ENCODE measurements at regions of chr10 and their contacts with region 1.

Region 1: GRCh38 chr10:103759100-103759781 is 96.1 kb downstream of the SH3PXD2A start:
- DNase-seq: peak; percentile 63
- H3K4me3 Mint-ChIP-seq: no peak overlapping the region
- H3K27ac Mint-ChIP-seq: peak overlapping the region; percentile 92
- H3K4me1 Mint-ChIP-seq: peaks cover 41% of the 10 kb centered on the region
- H3K27me3 Mint-ChIP-seq: no peaks in the 10 kb centered on the region
- CTCF ChIP-seq: no peak

Region 2: DNA sequence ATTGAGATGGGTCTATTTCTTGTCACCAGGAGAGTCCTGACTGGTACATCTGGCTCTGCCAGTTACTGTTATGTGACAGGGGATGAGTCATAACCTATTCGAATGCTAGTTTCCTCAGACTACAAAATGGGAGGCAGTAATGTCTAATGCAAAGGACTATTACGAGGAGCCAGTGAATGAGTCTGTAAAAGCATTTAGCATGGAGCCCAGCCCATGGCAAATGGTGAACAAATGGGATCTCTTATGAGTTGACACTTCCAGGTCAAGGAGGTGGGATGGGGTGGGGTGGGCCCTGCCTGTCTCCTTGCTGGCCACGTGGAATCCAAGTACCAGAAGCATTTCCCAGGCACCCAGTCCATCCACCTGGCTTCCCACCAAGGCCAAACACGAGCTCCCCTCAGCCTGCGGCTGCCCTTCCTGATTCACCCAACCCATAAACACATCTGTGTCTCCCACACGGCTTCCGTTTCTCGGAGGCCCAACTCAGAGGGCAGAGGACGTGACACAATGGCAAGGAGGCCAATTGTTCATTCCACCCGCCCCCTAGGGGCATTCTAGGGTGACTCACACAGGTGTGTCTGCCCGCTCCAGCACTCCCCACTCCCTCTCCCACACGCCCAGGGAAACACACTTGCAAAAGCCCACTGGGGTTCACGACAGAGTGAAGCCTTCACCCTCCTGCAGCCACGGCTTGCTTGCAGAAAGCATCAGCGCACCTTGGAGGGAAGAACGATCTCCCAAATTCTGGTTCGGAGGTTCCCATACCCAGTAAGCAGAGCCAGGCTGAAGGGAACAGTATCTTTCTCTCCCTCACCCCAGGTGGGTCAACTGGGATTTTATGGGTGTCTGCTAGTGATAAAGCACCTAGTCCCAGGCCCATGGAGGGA is 13.7 kb before region 1 on chr10:
- CTCF ChIA-PET with region 1: interaction called, 14 read pairs
- POLR2A ChIA-PET with region 1: interaction called, 55 read pairs
- intact Hi-C with region 1: no loop called
- DNase-seq: peak; percentile 93
- H3K4me3 Mint-ChIP-seq: peak overlapping the region; percentile 34
- H3K27ac Mint-ChIP-seq: peak overlapping the region; percentile 84
- H3K4me1 Mint-ChIP-seq: peaks cover 42% of the 10 kb centered on the region
- H3K27me3 Mint-ChIP-seq: no peaks in the 10 kb centered on the region
- CTCF ChIP-seq: no peak

Region 3: DNA sequence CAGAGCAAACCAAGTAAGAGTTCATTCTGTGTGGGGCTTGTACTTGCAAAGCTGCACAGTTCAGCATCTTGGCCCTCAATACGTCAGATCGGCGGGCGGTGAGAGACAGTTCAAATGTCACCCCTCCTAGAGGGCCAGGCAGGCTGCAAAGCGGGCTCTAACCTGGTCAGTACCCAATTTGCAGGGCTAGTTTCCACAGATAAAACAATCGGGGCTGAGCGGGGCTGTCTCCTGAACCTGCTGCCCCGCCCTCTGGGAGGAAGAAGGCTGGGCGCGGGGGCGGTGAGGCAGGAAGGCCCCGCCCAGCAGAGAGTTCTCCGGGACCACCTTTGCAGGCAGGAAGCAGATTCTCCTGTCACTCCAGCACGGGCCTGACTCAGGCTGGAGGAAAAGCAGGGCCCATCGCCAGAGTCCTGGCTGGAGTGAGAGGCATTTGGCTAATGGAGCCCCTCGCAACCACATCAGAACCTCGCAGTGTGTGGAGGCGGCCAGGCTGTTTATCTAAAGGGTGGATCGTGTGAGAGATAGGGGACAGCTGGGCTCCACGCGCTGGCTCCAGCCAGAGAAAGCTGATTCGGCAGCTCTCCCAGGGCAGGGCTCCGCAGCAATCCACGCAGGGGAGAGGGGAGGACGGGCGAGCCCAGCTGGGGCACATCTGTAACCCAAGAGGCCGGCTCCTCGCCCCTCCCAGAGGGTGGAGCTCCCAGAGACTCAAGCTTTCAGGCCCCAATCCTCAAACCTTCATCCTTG is 13.0 kb after region 1 on chr10:
- CTCF ChIA-PET with region 1: interaction called, 6 read pairs
- POLR2A ChIA-PET with region 1: interaction called, 20 read pairs
- intact Hi-C with region 1: no loop called
- DNase-seq: peak; percentile 70
- H3K4me3 Mint-ChIP-seq: peak overlapping the region; percentile 76
- H3K27ac Mint-ChIP-seq: peak overlapping the region; percentile 84
- H3K4me1 Mint-ChIP-seq: peaks cover 13% of the 10 kb centered on the region
- H3K27me3 Mint-ChIP-seq: no peaks in the 10 kb centered on the region
- CTCF ChIP-seq: no peak

Region 4: DNA sequence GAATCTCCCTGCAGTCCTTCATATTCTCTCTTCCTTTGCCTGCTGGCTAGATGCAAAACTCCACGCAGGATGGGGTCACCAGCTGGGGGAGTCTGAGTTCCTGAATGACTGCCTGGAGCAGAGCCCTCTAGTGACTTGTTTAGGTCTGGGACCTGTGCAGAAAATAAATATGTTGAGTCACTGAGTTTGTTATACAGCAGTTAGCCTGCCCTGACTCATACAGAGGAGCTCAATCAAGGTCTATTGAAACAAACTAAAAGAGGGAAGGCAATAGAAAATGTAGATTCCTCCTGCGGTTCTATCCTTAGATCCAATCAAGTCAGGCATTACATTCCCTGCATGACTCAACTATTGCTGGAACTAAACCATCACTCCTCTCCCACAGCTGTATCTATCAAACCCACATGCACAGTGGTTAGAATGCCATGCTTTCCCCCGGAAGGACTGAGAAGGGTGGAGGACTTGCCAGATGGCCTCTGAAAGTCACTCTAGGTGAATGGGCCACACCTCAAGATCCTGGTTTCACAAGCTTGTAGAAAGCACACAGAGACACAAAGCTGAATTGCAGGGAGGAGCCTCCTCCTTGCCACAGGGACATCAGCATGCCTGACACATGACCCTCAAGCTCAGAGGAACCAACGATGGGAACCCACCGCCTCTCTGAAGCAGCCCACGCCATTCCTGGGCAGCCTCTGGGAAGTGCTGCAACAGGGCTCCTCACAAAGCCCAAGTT is 22.3 kb after region 1 on chr10:
- CTCF ChIA-PET with region 1: interaction called, 5 read pairs
- POLR2A ChIA-PET with region 1: interaction called, 25 read pairs
- intact Hi-C with region 1: no loop called
- DNase-seq: peak; percentile 66
- H3K4me3 Mint-ChIP-seq: peak overlapping the region; percentile 23
- H3K27ac Mint-ChIP-seq: peak overlapping the region; percentile 74
- H3K4me1 Mint-ChIP-seq: peaks cover 47% of the 10 kb centered on the region
- H3K27me3 Mint-ChIP-seq: no peaks in the 10 kb centered on the region
- CTCF ChIP-seq: peak; percentile 12

Region 5: DNA sequence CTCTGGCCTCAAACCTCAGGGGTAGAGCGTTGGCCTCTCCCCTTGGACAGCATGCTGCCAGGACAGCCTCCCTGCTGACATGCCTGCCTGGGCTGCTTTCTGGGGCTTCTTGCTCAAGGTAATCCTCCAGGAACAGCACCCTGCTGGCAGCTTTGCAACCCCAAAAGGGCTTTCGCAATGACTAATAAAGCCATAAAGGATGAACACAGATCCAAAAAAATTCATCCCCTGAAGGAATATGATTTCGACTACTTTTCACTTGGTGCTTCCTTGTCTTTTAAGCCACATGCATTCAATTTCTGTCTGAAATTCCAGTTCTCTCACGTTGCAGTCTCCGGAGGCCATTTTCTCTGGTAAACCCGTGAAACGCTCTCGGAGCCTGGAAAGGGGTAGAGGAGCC is 111.3 kb after region 1 on chr10:
- CTCF ChIA-PET with region 1: no interaction called
- POLR2A ChIA-PET with region 1: interaction called, 40 read pairs
- intact Hi-C with region 1: no loop called
- DNase-seq: peak; percentile 97
- H3K4me3 Mint-ChIP-seq: peak overlapping the region; percentile 70
- H3K27ac Mint-ChIP-seq: peak overlapping the region; percentile 97
- H3K4me1 Mint-ChIP-seq: peaks cover 29% of the 10 kb centered on the region
- H3K27me3 Mint-ChIP-seq: no peaks in the 10 kb centered on the region
- CTCF ChIP-seq: no peak

Measured in MCF 10A (cell line).